ENCODE measurements at regions of chr17 and their contacts with region 1.

Region 1: GRCh38 chr17:29807520-29808351 is 122.3 kb downstream of the SSH2 start:
- DNase-seq: peak; percentile 72
- H3K4me3 Mint-ChIP-seq: no peak overlapping the region
- H3K27ac Mint-ChIP-seq: no peak overlapping the region
- H3K4me1 Mint-ChIP-seq: peaks cover 20% of the 10 kb centered on the region
- H3K27me3 Mint-ChIP-seq: no peaks in the 10 kb centered on the region

Region 2: DNA sequence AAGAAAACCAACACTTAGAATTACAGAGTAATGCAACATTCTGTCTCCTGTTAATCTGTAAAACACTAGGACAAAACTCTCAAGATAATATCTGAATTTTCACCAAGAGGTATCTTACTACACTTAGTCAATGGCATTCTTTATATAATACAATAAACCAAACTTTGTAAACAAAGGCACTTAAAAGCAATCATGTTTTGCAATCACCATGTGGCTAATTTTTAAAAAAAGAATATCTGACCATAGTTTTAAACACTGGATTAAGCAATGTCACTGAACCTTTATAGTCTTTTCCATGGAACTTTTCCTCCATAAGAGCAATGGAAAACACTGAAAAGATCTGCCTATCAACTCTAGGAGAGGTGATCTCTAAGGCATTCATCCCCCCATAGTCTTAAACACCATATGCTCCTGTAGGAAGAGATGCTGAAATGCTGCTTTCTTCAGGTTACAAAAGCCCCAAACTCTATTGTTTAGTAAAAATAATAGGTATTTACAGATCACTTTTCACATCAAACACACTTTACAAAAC is 40.9 kb before region 1 on chr17:
- CTCF ChIA-PET with region 1: no interaction called
- POLR2A ChIA-PET with region 1: no interaction called
- intact Hi-C with region 1: no loop called
- DNase-seq: no peak
- H3K4me3 Mint-ChIP-seq: no peak overlapping the region
- H3K27ac Mint-ChIP-seq: no peak overlapping the region
- H3K4me1 Mint-ChIP-seq: peaks cover 1% of the 10 kb centered on the region
- H3K27me3 Mint-ChIP-seq: no peaks in the 10 kb centered on the region

Region 3: GRCh38 chr17:29777663-29778062 is 30.1 kb before region 1 on chr17:
- CTCF ChIA-PET with region 1: interaction called, 13 read pairs
- POLR2A ChIA-PET with region 1: no interaction called
- intact Hi-C with region 1: no loop called
- DNase-seq: no peak
- H3K4me3 Mint-ChIP-seq: no peak overlapping the region
- H3K27ac Mint-ChIP-seq: no peak overlapping the region
- H3K4me1 Mint-ChIP-seq: peaks cover 7% of the 10 kb centered on the region
- H3K27me3 Mint-ChIP-seq: no peaks in the 10 kb centered on the region

Region 4: GRCh38 chr17:29788045-29788444 is 19.7 kb before region 1 on chr17:
- CTCF ChIA-PET with region 1: no interaction called
- POLR2A ChIA-PET with region 1: no interaction called
- intact Hi-C with region 1: no loop called
- DNase-seq: no peak
- H3K4me3 Mint-ChIP-seq: no peak overlapping the region
- H3K27ac Mint-ChIP-seq: no peak overlapping the region
- H3K4me1 Mint-ChIP-seq: peaks cover 4% of the 10 kb centered on the region
- H3K27me3 Mint-ChIP-seq: no peaks in the 10 kb centered on the region

Region 5: DNA sequence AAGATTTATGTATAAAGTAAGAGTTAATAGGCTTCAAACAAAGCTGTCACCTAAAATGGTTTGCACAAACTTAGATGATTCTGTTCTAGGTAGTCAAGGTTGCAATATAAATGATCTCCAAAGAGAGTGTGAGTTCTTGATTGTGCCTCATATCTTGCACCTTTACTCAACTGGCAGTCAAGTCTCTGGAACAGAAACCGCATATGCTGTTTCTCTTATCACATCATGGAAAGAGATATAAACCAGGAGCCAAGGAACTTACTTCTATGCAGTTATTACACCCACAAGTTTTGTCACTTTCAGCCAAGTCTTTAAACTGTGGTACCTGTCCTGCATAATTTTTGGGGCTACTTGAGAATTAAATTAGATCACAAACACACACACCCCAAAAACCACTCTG is 117.0 kb after region 1 on chr17:
- CTCF ChIA-PET with region 1: interaction called, 381 read pairs
- POLR2A ChIA-PET with region 1: interaction called, 4 read pairs
- intact Hi-C with region 1: no loop called
- DNase-seq: no peak
- H3K4me3 Mint-ChIP-seq: no peak overlapping the region
- H3K27ac Mint-ChIP-seq: no peak overlapping the region
- H3K4me1 Mint-ChIP-seq: peaks cover 30% of the 10 kb centered on the region
- H3K27me3 Mint-ChIP-seq: no peaks in the 10 kb centered on the region

Region 6: DNA sequence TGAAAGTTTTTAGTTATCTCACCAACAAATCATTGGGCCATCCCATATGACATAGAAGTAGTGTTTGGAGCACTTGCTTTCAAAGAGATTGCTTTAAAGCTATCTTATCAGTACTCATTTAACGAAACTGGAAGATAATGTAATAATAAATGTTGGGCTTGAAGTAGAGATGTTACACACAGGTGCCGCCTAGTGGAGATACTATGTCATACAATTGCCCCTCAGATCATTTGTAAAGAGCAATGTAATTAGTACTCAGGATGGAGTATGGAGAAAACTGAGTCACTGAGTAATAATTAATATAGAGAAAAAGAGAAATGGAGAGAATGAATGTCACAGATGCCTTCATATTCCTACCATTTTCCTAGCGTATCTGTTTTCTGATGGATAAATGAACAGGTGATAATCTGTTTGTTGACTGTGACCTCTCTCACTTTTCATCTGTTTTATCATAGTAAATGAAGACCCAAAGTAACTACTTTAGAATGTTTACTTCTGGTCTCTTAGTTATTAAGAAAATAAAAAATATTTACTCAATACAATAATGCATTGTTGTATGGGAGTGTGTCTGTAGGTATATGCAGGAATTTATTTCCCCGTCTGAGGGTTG is 214.1 kb after region 1 on chr17:
- CTCF ChIA-PET with region 1: interaction called, 22 read pairs
- POLR2A ChIA-PET with region 1: no interaction called
- intact Hi-C with region 1: loop called (anchors 1 kb)
- DNase-seq: peak; percentile 23
- H3K4me3 Mint-ChIP-seq: no peak overlapping the region
- H3K27ac Mint-ChIP-seq: no peak overlapping the region
- H3K4me1 Mint-ChIP-seq: no peaks in the 10 kb centered on the region
- H3K27me3 Mint-ChIP-seq: no peaks in the 10 kb centered on the region